ENCODE measurements at regions of chr14 and their contacts with region 1.

Region 1: GRCh38 chr14:99729991-99730868 is 46.1 kb downstream of the CYP46A1 start:
- DNase-seq: peak; percentile 87
- ATAC-seq: peak; percentile 78
- H3K4me3 ChIP-seq: peak overlapping the region; percentile 46
- H3K27ac ChIP-seq: peak overlapping the region; percentile 36
- H3K4me1 ChIP-seq: peaks cover 8% of the 10 kb centered on the region
- H3K27me3 ChIP-seq: no peaks in the 10 kb centered on the region
- CTCF ChIP-seq: peak; percentile 84

Region 2: GRCh38 chr14:99563233-99564129 is 166.7 kb before region 1 on chr14:
- intact Hi-C with region 1: no loop called
- DNase-seq: peak; percentile 93
- ATAC-seq: peak; percentile 89
- H3K4me3 ChIP-seq: no peak overlapping the region
- H3K27ac ChIP-seq: no peak overlapping the region
- H3K4me1 ChIP-seq: peaks cover 30% of the 10 kb centered on the region
- H3K27me3 ChIP-seq: no peaks in the 10 kb centered on the region
- CTCF ChIP-seq: peak; percentile 50

Region 3: DNA sequence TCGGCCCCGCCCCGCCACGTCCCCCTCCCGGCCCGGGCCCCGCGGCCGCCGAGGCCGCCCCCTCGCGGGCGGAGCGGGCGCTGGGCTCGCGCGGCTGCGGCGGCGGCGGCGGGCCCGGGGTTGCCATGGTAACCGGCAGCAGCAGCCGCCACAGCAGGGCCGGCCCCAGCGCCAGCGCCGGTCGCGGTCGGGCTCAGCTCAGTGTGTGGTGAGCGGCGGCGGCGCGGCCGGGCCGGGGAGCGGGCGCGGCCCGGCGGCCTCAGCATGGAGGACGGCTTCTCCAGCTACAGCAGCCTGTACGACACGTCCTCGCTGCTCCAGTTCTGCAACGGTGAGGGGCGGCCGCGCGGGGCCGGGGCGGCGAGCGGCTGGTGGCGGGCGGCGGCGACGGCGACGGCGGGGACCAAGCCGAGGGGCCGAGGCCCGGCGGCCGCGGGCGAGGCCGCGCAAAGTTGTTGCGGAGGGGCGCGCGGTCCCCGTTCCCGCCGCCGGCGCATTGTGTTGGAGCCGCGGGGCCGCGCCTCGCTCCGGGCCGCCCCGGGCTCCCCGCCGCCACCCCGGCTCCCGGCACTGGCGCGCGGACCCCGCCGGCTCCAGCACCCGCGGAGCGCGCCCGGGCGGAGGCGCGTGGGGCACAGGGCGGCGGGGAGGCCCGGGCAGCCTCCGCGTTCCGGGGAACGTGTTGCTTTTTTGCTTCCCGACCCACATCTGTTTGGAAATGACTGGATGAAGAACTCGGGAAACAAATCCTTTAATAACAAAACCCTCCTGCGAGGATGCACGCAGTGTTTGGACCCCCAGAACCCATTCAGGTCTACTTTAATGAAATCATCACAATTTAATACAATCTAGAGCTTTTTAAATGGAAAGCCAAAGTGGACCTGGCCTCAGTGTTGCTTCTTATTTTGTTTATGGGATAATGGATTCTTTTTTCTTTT is 63.3 kb after region 1 on chr14 and contains the start of gene EML1:
- intact Hi-C with region 1: loop called (anchors 10 kb)
- DNase-seq: peak; percentile 92
- ATAC-seq: peak; percentile 94
- H3K4me3 ChIP-seq: peak within 1 kb of the TSS; percentile 52
- H3K27ac ChIP-seq: peak within 1 kb of the TSS; percentile 68
- H3K4me1 ChIP-seq: peaks cover 15% of the 10 kb centered on the region
- H3K27me3 ChIP-seq: no peaks in the 10 kb centered on the region
- CTCF ChIP-seq: no peak
- total RNA-seq, gene EML1: 42.2 TPM

Region 4: DNA sequence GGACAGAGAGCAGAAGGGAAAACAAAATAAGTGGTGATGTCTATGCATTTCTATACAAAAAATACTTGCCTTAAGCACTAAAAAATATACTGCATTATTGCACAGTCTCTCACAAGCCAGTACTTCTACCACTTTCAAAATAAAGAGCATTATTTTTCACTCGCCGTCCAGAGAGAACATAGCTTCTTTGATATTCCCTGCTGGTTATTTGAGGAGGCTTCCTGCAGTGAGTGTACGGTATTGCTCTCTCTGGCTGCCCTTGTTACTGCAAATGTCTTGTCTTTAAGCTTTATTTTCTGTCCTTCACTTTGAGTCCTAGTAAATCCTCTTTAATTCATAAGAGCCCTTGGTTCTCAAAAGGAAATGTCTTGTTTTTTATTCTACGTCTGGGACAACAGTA is 144.1 kb after region 1 on chr14:
- intact Hi-C with region 1: no loop called
- DNase-seq: no peak
- ATAC-seq: no peak
- H3K4me3 ChIP-seq: no peak overlapping the region
- H3K27ac ChIP-seq: no peak overlapping the region
- H3K4me1 ChIP-seq: no peaks in the 10 kb centered on the region
- H3K27me3 ChIP-seq: no peaks in the 10 kb centered on the region
- CTCF ChIP-seq: no peak

Region 5: DNA sequence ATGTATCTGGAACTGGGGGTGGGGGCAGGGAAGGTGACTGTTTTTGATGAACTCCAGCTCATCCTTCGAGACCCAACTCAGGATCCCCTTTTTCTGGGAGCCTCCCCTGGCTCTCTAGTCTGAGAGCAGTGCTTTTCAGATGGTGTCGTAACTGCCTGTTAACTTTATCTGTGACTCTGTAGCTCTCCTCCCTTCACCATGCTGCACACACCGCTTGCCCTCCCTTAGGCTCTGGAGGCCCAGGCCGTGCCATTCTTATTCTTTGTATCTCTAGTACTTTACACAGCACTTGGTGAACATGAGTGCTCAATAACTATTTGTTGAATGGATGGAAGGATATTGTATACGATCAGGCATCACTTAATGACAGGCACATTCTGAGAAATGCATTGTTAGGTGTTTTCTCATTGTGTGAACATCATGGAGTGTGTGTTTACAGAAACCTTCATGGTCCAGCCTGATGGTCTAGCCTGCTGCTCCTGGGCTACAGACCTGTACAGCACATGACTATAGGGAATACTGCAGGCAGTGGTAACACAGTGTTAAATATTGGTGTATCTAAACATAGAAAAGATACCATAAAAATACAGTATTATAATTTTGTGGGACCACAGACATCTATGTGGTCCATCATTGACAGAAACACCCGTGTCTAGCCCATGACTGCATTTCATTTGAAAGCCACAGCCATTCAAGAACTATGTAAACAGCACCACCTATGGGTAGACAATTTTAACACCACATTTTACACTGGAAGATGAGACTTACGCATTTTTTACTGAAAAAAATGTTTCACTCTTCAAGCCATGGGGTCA is 154.8 kb after region 1 on chr14:
- intact Hi-C with region 1: loop called (anchors 5 kb)
- DNase-seq: no peak
- ATAC-seq: peak; percentile 83
- H3K4me3 ChIP-seq: no peak overlapping the region
- H3K27ac ChIP-seq: no peak overlapping the region
- H3K4me1 ChIP-seq: no peaks in the 10 kb centered on the region
- H3K27me3 ChIP-seq: no peaks in the 10 kb centered on the region
- CTCF ChIP-seq: peak; percentile 76

Region 6: GRCh38 chr14:99918781-99919180 is 188.6 kb after region 1 on chr14:
- intact Hi-C with region 1: no loop called
- DNase-seq: no peak
- ATAC-seq: no peak
- H3K4me3 ChIP-seq: no peak overlapping the region
- H3K27ac ChIP-seq: no peak overlapping the region
- H3K4me1 ChIP-seq: no peaks in the 10 kb centered on the region
- H3K27me3 ChIP-seq: no peaks in the 10 kb centered on the region
- CTCF ChIP-seq: no peak

Region 7: DNA sequence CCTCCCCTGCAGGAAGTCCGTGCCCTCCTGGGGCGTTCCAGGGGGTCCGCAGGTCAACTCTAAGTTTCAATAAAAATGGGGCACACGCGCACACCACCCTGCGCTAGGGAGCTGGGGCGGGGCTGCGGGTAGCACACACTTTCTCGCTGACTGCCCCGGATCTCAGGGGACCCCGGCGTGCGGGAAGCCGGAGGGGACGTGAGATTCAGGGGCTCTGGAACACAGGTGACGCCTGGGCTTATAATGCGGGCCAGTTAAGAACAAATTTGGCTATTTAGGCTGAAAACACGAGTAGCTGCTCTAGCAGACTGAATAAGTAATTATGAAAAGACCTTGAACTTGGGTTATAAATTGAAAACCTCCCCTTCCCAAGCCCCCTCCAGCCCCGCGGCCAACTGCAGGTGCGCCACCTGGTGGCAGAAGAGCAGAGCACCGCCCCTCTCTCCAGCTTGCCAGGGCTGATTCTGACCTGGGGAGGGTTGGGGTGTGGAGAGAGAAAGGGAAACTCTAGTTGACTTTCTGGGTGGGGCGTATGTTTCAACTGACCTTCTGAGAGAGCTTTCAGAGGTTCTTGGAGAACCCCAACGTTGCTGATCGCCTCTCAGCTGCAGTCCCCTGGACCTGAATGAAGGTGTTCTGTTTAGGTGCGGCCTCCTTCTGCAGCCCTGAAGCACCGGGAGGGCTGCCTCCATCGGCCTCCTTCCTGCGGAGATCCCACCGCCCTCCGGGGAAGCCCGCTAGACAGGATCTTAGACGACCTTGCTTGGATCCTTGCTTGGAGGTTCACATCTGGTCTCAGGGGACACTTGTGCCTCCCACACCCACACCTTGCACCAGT is 216.6 kb after region 1 on chr14:
- intact Hi-C with region 1: no loop called
- DNase-seq: no peak
- ATAC-seq: peak; percentile 67
- H3K4me3 ChIP-seq: no peak overlapping the region
- H3K27ac ChIP-seq: no peak overlapping the region
- H3K4me1 ChIP-seq: peaks cover 22% of the 10 kb centered on the region
- H3K27me3 ChIP-seq: no peaks in the 10 kb centered on the region
- CTCF ChIP-seq: peak; percentile 82

Measured in upper lobe of right lung (tissue), 1 donor.